ENCODE measurements at regions of chr13 and their contacts with region 1.

Region 1: DNA sequence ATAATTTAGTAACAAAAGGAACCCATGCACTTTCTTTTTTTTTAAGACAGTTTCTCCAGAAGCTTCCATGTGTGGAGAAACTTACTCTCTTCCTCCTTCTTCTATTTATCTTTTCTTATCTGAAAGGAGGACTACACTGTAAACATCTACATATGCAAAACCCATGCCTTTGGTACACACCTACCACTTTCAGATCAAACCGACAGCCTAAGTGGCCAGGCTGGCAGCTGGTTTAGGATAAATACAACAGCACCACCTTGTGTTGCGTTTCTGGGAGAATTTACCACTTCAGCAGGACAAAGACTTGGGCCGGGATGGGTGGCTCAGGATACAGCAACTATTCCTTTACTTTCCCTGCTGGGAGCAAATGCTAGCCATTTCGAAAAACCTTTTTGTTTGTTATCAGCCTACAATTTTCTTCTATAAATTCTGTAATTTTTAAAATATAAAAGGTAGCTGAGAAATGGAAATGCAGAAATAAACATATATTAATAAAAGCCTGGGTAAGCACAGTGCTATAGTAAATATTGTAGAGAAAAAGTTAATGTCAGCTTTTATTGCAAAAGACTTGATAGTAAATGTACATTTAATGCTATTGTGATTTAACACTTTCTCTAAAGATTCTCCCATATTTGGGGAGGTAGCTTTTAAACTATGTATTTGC is 94.0 kb upstream of the RFC3 start:
- DNase-seq: peak; percentile 85
- ATAC-seq: peak; percentile 94
- H3K4me3 ChIP-seq: no peak overlapping the region
- H3K27ac ChIP-seq: no peak overlapping the region
- H3K4me1 ChIP-seq: peaks cover 6% of the 10 kb centered on the region; the same call in 1 of the 2 replicates
- H3K27me3 ChIP-seq: no peaks in the 10 kb centered on the region
- CTCF ChIP-seq: peak; percentile 84
- POLR2A ChIP-seq: no peak
- RAD21 ChIP-seq: peak; percentile 88

Region 2: GRCh38 chr13:33125821-33126570 is 597.9 kb before region 1 on chr13:
- CTCF ChIA-PET with region 1: no interaction called
- POLR2A ChIA-PET with region 1: no interaction called
- dilution Hi-C with region 1: no loop called
- in situ Hi-C with region 1: no loop called
- intact Hi-C with region 1: loop called (anchors 10 kb)
- DNase-seq: peak; percentile 97
- ATAC-seq: peak; percentile 85
- H3K4me3 ChIP-seq: no peak overlapping the region
- H3K27ac ChIP-seq: peak overlapping the region; percentile 80
- H3K4me1 ChIP-seq: peaks cover 30% of the 10 kb centered on the region
- H3K27me3 ChIP-seq: no peaks in the 10 kb centered on the region
- CTCF ChIP-seq: no peak
- POLR2A ChIP-seq: no peak
- RAD21 ChIP-seq: peak; percentile 9; the same call in 1 of the 2 replicates

Region 3: GRCh38 chr13:33228648-33229445 is 495.1 kb before region 1 on chr13:
- CTCF ChIA-PET with region 1: no interaction called
- POLR2A ChIA-PET with region 1: no interaction called
- dilution Hi-C with region 1: no loop called
- in situ Hi-C with region 1: no loop called
- intact Hi-C with region 1: loop called (anchors 5 kb)
- DNase-seq: peak; percentile 83
- ATAC-seq: peak; percentile 46
- H3K4me3 ChIP-seq: peak overlapping the region; percentile 2; the same call in 1 of the 2 replicates
- H3K27ac ChIP-seq: peak overlapping the region; percentile 97
- H3K4me1 ChIP-seq: peaks cover 29% of the 10 kb centered on the region
- H3K27me3 ChIP-seq: no peaks in the 10 kb centered on the region
- CTCF ChIP-seq: peak; percentile 82
- POLR2A ChIP-seq: 0 out of 2 replicates have a peak, but pooled peaks have one; percentile 27
- RAD21 ChIP-seq: peak; percentile 83

Region 4: DNA sequence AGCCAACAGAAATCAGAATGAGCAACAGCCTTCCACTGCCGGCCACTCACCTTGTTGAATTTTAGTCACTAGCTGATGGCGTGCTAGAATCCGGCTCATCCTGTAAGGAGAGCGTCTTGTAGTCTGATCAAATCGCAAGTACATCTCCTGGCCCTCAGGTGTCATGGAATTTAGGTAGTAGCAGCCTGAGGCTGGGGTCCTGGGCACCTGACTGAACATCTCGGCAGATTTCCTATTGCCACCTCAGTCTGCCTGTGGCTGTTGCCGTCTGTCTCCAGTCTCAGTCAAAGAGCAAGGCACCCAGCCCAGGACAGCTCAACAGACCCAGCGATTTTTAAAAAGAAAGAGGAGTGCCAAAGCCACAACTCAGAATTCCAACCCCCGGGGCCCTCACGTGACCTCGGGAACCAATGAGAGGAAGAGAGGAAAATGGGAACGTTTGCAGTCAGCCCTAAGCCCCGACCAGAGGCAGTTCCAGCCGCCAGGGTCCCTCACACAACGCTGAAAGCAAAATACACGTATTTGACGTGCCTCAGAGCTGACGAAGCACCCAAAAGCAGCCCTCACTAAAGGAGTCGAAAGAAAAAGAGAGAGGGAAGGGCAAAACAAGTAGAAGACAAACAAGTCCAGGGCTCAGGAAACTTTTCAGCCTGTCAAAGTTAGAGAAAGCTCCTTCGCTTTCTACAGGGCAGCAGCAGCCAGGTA is 438.3 kb before region 1 on chr13 and contains the start of gene STARD13:
- CTCF ChIA-PET with region 1: no interaction called
- POLR2A ChIA-PET with region 1: no interaction called
- dilution Hi-C with region 1: no loop called
- in situ Hi-C with region 1: loop called (anchors 25 kb)
- intact Hi-C with region 1: loop called (anchors 5 kb)
- DNase-seq: peak; percentile 98
- ATAC-seq: peak; percentile 84
- H3K4me3 ChIP-seq: peak within 1 kb of the TSS; percentile 68
- H3K27ac ChIP-seq: peak within 1 kb of the TSS; percentile 97
- H3K4me1 ChIP-seq: peaks cover 17% of the 10 kb centered on the region
- H3K27me3 ChIP-seq: no peaks in the 10 kb centered on the region
- CTCF ChIP-seq: peak; percentile 64
- POLR2A ChIP-seq: peak; percentile 99
- RAD21 ChIP-seq: peak; percentile 60
- total RNA-seq, gene STARD13: 46.6 and 46.9 TPM in 2 replicates

Region 5: DNA sequence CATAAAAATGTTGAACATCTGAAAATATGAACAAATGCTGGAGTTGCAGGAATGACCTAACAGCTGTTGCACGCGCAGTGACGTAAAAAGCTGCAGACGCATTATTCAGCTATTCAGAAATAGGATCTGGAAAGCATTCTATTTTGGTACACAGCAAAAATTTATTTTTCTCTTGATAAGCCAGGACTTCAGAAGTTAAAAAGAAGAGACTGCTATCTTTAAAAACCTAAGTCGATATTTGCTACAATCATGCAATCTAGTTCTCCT is 401.4 kb before region 1 on chr13:
- CTCF ChIA-PET with region 1: no interaction called
- POLR2A ChIA-PET with region 1: no interaction called
- dilution Hi-C with region 1: no loop called
- in situ Hi-C with region 1: no loop called
- intact Hi-C with region 1: loop called (anchors 10 kb)
- DNase-seq: peak; percentile 95
- ATAC-seq: peak; percentile 55
- H3K4me3 ChIP-seq: peak overlapping the region; percentile 27; the same call in 1 of the 2 replicates
- H3K27ac ChIP-seq: peak overlapping the region; percentile 96; the same call in 1 of the 2 replicates
- H3K4me1 ChIP-seq: peaks cover 18% of the 10 kb centered on the region
- H3K27me3 ChIP-seq: no peaks in the 10 kb centered on the region
- CTCF ChIP-seq: no peak
- POLR2A ChIP-seq: no peak
- RAD21 ChIP-seq: no peak

Region 6: DNA sequence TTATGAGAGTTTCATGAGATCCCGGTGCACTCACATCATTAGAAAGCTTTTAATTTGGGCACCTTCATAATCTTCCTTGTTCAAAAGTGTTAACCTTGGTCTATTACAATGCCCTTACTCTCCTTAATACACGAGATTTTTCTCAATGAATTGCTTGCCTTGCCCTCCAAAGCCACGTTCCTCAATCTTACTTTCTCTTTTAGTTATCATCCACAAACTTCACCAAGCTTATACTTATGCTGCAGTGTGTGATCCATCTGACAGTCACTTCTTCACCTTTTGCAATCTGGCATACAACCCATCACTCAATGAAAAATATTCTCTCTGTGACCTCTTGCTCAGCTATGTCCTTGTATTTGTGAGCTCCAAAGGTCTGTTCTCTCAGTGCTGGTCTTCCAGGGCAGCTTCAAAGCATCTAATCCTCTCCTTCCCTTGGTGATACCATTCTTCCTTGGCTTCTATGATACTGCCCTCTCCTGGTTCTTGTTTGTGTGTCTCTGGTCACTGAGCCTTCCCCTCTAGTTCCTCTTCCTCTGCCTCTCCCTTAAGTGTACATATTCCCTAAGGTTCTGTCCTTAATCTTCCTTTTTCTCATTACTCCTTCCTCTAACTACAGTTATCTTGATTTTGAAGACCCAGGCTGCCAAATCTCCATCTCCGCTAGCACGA is 236.2 kb before region 1 on chr13:
- CTCF ChIA-PET with region 1: no interaction called
- POLR2A ChIA-PET with region 1: no interaction called
- dilution Hi-C with region 1: no loop called
- in situ Hi-C with region 1: no loop called
- intact Hi-C with region 1: loop called (anchors 5 kb)
- DNase-seq: peak; percentile 65
- ATAC-seq: peak; percentile 91
- H3K4me3 ChIP-seq: peak overlapping the region; percentile 8; the same call in 1 of the 2 replicates
- H3K27ac ChIP-seq: no peak overlapping the region
- H3K4me1 ChIP-seq: peaks cover 1% of the 10 kb centered on the region; the same call in 1 of the 2 replicates
- H3K27me3 ChIP-seq: no peaks in the 10 kb centered on the region
- CTCF ChIP-seq: peak; percentile 52
- POLR2A ChIP-seq: no peak
- RAD21 ChIP-seq: peak; percentile 62

Region 7: GRCh38 chr13:33629605-33630360 is 94.1 kb before region 1 on chr13:
- CTCF ChIA-PET with region 1: no interaction called
- POLR2A ChIA-PET with region 1: no interaction called
- dilution Hi-C with region 1: no loop called
- in situ Hi-C with region 1: no loop called
- intact Hi-C with region 1: no loop called
- DNase-seq: no peak
- ATAC-seq: no peak
- H3K4me3 ChIP-seq: no peak overlapping the region
- H3K27ac ChIP-seq: no peak overlapping the region
- H3K4me1 ChIP-seq: peaks cover 6% of the 10 kb centered on the region; the same call in 1 of the 2 replicates
- H3K27me3 ChIP-seq: no peaks in the 10 kb centered on the region
- CTCF ChIP-seq: no peak
- POLR2A ChIP-seq: no peak
- RAD21 ChIP-seq: no peak

Region 8: DNA sequence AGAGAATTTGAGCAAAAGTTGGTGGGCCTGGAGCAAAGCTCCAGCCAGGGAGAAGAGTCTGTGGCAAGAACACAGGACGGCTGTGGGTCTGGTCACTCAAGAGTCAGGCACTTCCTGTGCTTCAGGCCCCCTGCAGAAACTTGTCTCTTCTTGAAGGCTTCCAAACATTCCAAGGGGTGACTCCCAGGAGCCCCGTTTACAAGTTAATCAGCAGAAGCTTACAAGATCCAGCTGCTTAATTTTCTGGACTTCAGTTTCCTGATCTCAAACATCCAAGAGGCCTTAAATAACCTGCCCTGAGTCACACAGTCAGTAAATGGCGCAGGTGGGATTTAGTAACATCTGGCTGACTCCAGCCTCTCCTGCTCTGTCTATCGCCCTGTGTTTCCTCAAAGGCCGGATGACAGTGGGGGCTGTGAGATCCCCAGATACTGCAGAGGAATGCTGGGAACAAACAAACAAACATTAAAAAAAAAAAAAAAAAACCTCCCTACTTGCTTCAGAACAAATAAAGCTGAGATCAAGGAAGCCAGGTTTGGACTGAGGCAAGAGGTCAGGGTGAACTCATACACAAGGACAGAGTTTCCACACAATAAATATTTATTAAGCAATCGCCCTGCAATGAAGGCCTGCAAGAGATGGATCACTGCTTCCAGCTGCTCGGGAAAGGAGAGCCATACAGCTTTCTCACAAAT is 81.4 kb before region 1 on chr13:
- CTCF ChIA-PET with region 1: interaction called, 5 read pairs
- POLR2A ChIA-PET with region 1: no interaction called
- dilution Hi-C with region 1: no loop called
- in situ Hi-C with region 1: no loop called
- intact Hi-C with region 1: loop called (anchors 5 kb)
- DNase-seq: peak; percentile 72
- ATAC-seq: peak; percentile 65
- H3K4me3 ChIP-seq: no peak overlapping the region
- H3K27ac ChIP-seq: peak overlapping the region; percentile 78
- H3K4me1 ChIP-seq: peaks cover 25% of the 10 kb centered on the region
- H3K27me3 ChIP-seq: no peaks in the 10 kb centered on the region
- CTCF ChIP-seq: no peak
- POLR2A ChIP-seq: no peak
- RAD21 ChIP-seq: no peak

Region 9: GRCh38 chr13:33690354-33690753 is 33.5 kb before region 1 on chr13:
- CTCF ChIA-PET with region 1: no interaction called
- POLR2A ChIA-PET with region 1: no interaction called
- dilution Hi-C with region 1: no loop called
- in situ Hi-C with region 1: no loop called
- intact Hi-C with region 1: no loop called
- DNase-seq: no peak
- ATAC-seq: no peak
- H3K4me3 ChIP-seq: no peak overlapping the region
- H3K27ac ChIP-seq: no peak overlapping the region
- H3K4me1 ChIP-seq: no peaks in the 10 kb centered on the region
- H3K27me3 ChIP-seq: no peaks in the 10 kb centered on the region; the same call in 1 of the 2 replicates
- CTCF ChIP-seq: no peak
- POLR2A ChIP-seq: no peak
- RAD21 ChIP-seq: no peak

Region 10: GRCh38 chr13:34156841-34157365 is 433.0 kb after region 1 on chr13:
- CTCF ChIA-PET with region 1: no interaction called
- POLR2A ChIA-PET with region 1: no interaction called
- dilution Hi-C with region 1: no loop called
- in situ Hi-C with region 1: no loop called
- intact Hi-C with region 1: no loop called
- DNase-seq: peak; percentile 95
- ATAC-seq: peak; percentile 99
- H3K4me3 ChIP-seq: no peak overlapping the region
- H3K27ac ChIP-seq: no peak overlapping the region; the same call in 1 of the 2 replicates
- H3K4me1 ChIP-seq: peaks cover 7% of the 10 kb centered on the region
- H3K27me3 ChIP-seq: no peaks in the 10 kb centered on the region
- CTCF ChIP-seq: no peak
- POLR2A ChIP-seq: no peak
- RAD21 ChIP-seq: no peak